ENCODE measurements at regions of chr17 and their contacts with region 1.

Region 1: GRCh38 chr17:81484195-81484979 is 28.2 kb downstream of the ACTG1 start:
- DNase-seq: peak; percentile 84 to 87
- H3K4me3 ChIP-seq: peak overlapping the region in 1 of 2 donors; percentile 32
- H3K27ac ChIP-seq: no peak overlapping the region
- H3K4me1 ChIP-seq: peaks cover 0 to 30% of the 10 kb centered on the region in 2 donors
- H3K27me3 ChIP-seq: no peaks in the 10 kb centered on the region
- CTCF ChIP-seq: peak; percentile 92 to 100 (median 100)
- POLR2A ChIP-seq: peak in 1 of 2 donors; percentile 37

Region 2: GRCh38 chr17:81255019-81255717 is 229.2 kb before region 1 on chr17:
- intact Hi-C with region 1: loop called (anchors 5 kb)
- DNase-seq: peak; percentile 82 to 83
- H3K4me3 ChIP-seq: no peak overlapping the region
- H3K27ac ChIP-seq: peak overlapping the region in 1 of 2 donors; percentile 37
- H3K4me1 ChIP-seq: no peaks in the 10 kb centered on the region
- H3K27me3 ChIP-seq: no peaks in the 10 kb centered on the region
- CTCF ChIP-seq: peak; percentile 52 to 68 (median 58)
- POLR2A ChIP-seq: no peak

Region 3: GRCh38 chr17:81294856-81295680 is 189.3 kb before region 1 on chr17 and contains the start of gene SLC38A10:
- intact Hi-C with region 1: loop called (anchors 5 kb)
- DNase-seq: peak; percentile 88 to 91
- H3K4me3 ChIP-seq: peak within 1 kb of the TSS; percentile 64 to 94
- H3K27ac ChIP-seq: peak within 1 kb of the TSS; percentile 87 to 89
- H3K4me1 ChIP-seq: peaks cover 4 to 7% of the 10 kb centered on the region in 2 donors
- H3K27me3 ChIP-seq: no peaks in the 10 kb centered on the region
- CTCF ChIP-seq: peak in 3 of 4 experiments; percentile 4 to 46 (median 36)
- POLR2A ChIP-seq: peak; percentile 87 to 97
- total RNA-seq, gene SLC38A10: 50.7 to 55.4 (median 53.3) TPM

Region 4: GRCh38 chr17:81387100-81388090 is 97.0 kb before region 1 on chr17:
- intact Hi-C with region 1: loop called (anchors 5 kb)
- DNase-seq: peak; percentile 80 to 82
- H3K4me3 ChIP-seq: peak overlapping the region; percentile 49 to 80
- H3K27ac ChIP-seq: peak overlapping the region; percentile 90 to 99
- H3K4me1 ChIP-seq: peaks cover 5 to 31% of the 10 kb centered on the region in 2 donors
- H3K27me3 ChIP-seq: no peaks in the 10 kb centered on the region
- CTCF ChIP-seq: no peak
- POLR2A ChIP-seq: peak; percentile 49 to 61

Region 5: GRCh38 chr17:81394921-81395599 is 89.3 kb before region 1 on chr17 and contains the start of gene BAHCC1:
- intact Hi-C with region 1: loop called (anchors 5 kb)
- DNase-seq: peak; percentile 100
- H3K4me3 ChIP-seq: peak within 1 kb of the TSS; percentile 52 to 63
- H3K27ac ChIP-seq: peak within 1 kb of the TSS; percentile 97
- H3K4me1 ChIP-seq: peaks cover 0 to 10% of the 10 kb centered on the region in 2 donors
- H3K27me3 ChIP-seq: no peaks in the 10 kb centered on the region
- CTCF ChIP-seq: peak in 1 of 4 experiments; percentile 7
- POLR2A ChIP-seq: peak; percentile 95 to 96
- total RNA-seq, gene BAHCC1: 1.5 to 34.1 (median 8.5) TPM